Aorta (tissue), 5 donors: ENCODE measurements at regions of chr9 and their contacts with region 1.

Region 1: GRCh38 chr9:75504721-75505120 is 385.8 kb upstream of the PCSK5 start:
- DNase-seq: no peak
- ATAC-seq: no peak
- H3K4me3 ChIP-seq: no peak overlapping the region
- H3K27ac ChIP-seq: no peak overlapping the region
- H3K4me1 ChIP-seq: peaks cover 7% of the 10 kb centered on the region in 2 donors
- H3K27me3 ChIP-seq: no peaks in the 10 kb centered on the region

Region 2: GRCh38 chr9:75408391-75408790 is 96.3 kb before region 1 on chr9:
- intact Hi-C with region 1: loop called in 1 of 2 experiments (anchors 5 kb)
- DNase-seq: no peak
- ATAC-seq: no peak
- H3K4me3 ChIP-seq: no peak overlapping the region
- H3K27ac ChIP-seq: no peak overlapping the region
- H3K4me1 ChIP-seq: no peaks in the 10 kb centered on the region
- H3K27me3 ChIP-seq: no peaks in the 10 kb centered on the region